ENCODE measurements at regions of chr16 and their contacts with region 1.

Region 1: GRCh38 chr16:70685938-70686375 is at the start of gene MTSS2:
- DNase-seq: peak; percentile 91
- H3K4me3 ChIP-seq: peak within 1 kb of the TSS; percentile 65
- H3K27ac ChIP-seq: peak within 1 kb of the TSS; percentile 80
- H3K4me1 ChIP-seq: peaks cover 24% of the 10 kb centered on the region
- H3K27me3 ChIP-seq: no peaks in the 10 kb centered on the region
- CTCF ChIP-seq: no peak
- total RNA-seq, gene MTSS2: 47.6 and 54.8 TPM in 2 replicates

Region 2: DNA sequence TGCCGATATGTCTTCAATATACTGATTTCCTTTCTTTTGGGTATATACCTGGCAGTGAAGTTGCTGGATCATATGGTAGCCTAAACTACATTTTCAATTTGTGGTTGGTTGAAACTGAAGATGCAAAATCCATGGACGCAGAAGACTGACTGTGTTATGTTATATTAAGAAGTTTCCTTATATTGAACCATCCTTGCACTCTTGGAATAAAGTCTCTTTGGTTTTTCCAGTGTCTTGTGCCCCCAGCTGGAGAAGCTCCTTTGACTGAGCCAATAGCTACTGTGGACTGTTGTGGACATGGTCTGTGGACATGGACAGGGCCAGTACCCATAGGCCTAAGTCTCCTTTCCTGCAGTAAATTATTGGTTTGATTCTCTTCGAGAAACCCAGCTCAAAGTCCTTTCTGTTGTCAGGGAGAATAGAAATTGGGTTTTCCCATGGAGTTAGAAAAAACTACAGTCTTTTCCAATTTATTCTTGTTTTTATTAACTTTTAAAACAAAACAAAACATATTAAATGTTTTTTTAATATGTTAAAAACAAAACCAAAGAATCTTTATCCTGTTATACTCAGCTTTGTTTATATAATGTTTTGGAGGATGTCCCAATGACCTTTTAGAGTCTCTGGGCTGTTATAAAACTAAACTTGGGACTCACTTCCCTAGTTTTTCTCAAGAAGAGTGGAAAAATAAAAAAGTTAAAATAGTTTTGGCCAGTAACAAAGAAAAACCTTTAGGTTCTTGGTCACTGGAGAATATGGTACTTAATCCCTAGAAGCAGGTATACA is 54.8 kb before region 1 on chr16:
- CTCF ChIA-PET with region 1: no interaction called
- POLR2A ChIA-PET with region 1: no interaction called
- intact Hi-C with region 1: no loop called
- DNase-seq: no peak
- H3K4me3 ChIP-seq: no peak overlapping the region
- H3K27ac ChIP-seq: no peak overlapping the region
- H3K4me1 ChIP-seq: no peaks in the 10 kb centered on the region
- H3K27me3 ChIP-seq: no peaks in the 10 kb centered on the region
- CTCF ChIP-seq: no peak

Region 3: GRCh38 chr16:70750893-70751475 is 65.0 kb after region 1 on chr16:
- CTCF ChIA-PET with region 1: no interaction called
- POLR2A ChIA-PET with region 1: no interaction called
- intact Hi-C with region 1: loop called (anchors 5 kb)
- DNase-seq: no peak
- H3K4me3 ChIP-seq: no peak overlapping the region
- H3K27ac ChIP-seq: no peak overlapping the region
- H3K4me1 ChIP-seq: peaks cover 47% of the 10 kb centered on the region
- H3K27me3 ChIP-seq: no peaks in the 10 kb centered on the region
- CTCF ChIP-seq: no peak

Region 4: GRCh38 chr16:71367241-71367976 is 681.5 kb after region 1 on chr16:
- CTCF ChIA-PET with region 1: no interaction called
- POLR2A ChIA-PET with region 1: no interaction called
- intact Hi-C with region 1: loop called (anchors 10 kb)
- DNase-seq: peak; percentile 77
- H3K4me3 ChIP-seq: no peak overlapping the region
- H3K27ac ChIP-seq: no peak overlapping the region
- H3K4me1 ChIP-seq: no peaks in the 10 kb centered on the region
- H3K27me3 ChIP-seq: peaks cover 48% of the 10 kb centered on the region
- CTCF ChIP-seq: peak; percentile 81